HepG2 (cell line): ENCODE measurements at regions of chr3 and their contacts with region 1.

Region 1: GRCh38 chr3:133384331-133385027 is 15.4 kb upstream of the BFSP2 start:
- DNase-seq: peak; percentile 46
- ATAC-seq: peak; percentile 96
- H3K4me3 ChIP-seq: no peak overlapping the region
- H3K27ac ChIP-seq: no peak overlapping the region
- H3K4me1 ChIP-seq: peaks cover 13% of the 10 kb centered on the region
- H3K27me3 ChIP-seq: peaks cover 0 to 11% of the 10 kb centered on the region in 2 experiments; a peak in 2 of 5 replicates
- CTCF ChIP-seq: peak; percentile 96
- EP300 ChIP-seq: no peak
- POLR2A ChIP-seq: no peak
- RAD21 ChIP-seq: peak; percentile 88

Region 2: GRCh38 chr3:132535575-132536441 is 848.7 kb before region 1 on chr3:
- CTCF ChIA-PET with region 1: no interaction called
- POLR2A ChIA-PET with region 1: no interaction called
- in situ Hi-C with region 1: loop called (anchors 25 kb)
- intact Hi-C with region 1: no loop called
- DNase-seq: peak; percentile 69
- ATAC-seq: peak; percentile 90
- H3K4me3 ChIP-seq: no peak overlapping the region
- H3K27ac ChIP-seq: peak overlapping the region; percentile 14
- H3K4me1 ChIP-seq: peaks cover 23% of the 10 kb centered on the region
- H3K27me3 ChIP-seq: no peaks in the 10 kb centered on the region
- CTCF ChIP-seq: peak; percentile 75
- EP300 ChIP-seq: no peak
- POLR2A ChIP-seq: no peak
- RAD21 ChIP-seq: peak; percentile 45

Region 3: DNA sequence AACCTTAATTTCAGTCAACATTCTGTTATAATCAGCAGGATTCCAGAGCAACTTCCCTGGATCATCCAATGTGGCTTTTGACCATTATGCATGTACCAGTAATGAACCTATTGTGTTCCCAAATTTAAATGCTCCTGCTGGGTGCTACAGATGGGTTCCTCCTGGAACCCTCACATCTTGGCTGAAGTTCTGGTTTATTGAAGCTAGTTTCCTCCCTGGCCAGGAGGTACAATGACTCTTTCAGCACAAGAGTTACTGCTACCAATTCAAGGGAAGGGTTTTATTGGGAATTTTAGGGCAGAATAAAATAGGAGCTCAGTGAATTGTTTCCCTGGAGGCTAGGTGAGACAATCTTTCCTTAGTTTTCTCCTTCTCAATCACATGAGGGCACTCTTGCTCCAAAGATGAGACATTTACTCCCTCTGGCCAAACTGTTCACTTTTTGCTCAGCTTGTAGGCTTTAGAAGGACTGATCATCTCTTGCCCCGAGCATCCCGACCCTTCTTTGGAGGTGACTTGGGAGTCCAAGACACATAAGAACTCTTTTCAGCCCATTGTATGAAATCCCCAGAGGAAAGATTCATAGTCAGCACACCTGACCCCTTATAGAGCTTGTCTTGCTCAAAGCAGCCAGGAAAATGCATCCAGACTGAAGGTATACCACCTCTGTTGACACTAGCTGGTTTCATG is 653.4 kb before region 1 on chr3:
- CTCF ChIA-PET with region 1: interaction called, 12 read pairs
- POLR2A ChIA-PET with region 1: no interaction called
- in situ Hi-C with region 1: loop called (anchors 5 kb)
- intact Hi-C with region 1: loop called (anchors 1 kb)
- DNase-seq: peak; percentile 33
- ATAC-seq: peak; percentile 84
- H3K4me3 ChIP-seq: no peak overlapping the region
- H3K27ac ChIP-seq: no peak overlapping the region
- H3K4me1 ChIP-seq: no peaks in the 10 kb centered on the region
- H3K27me3 ChIP-seq: no peaks in the 10 kb centered on the region; a peak in 1 of 5 replicates
- CTCF ChIP-seq: peak; percentile 69
- EP300 ChIP-seq: no peak
- POLR2A ChIP-seq: no peak
- RAD21 ChIP-seq: peak; percentile 58

Region 4: GRCh38 chr3:132803889-132804288 is 580.6 kb before region 1 on chr3:
- CTCF ChIA-PET with region 1: no interaction called
- POLR2A ChIA-PET with region 1: no interaction called
- in situ Hi-C with region 1: no loop called
- intact Hi-C with region 1: loop called (anchors 5 kb)
- DNase-seq: no peak
- ATAC-seq: peak; percentile 82
- H3K4me3 ChIP-seq: no peak overlapping the region
- H3K27ac ChIP-seq: no peak overlapping the region
- H3K4me1 ChIP-seq: no peaks in the 10 kb centered on the region
- H3K27me3 ChIP-seq: no peaks in the 10 kb centered on the region
- CTCF ChIP-seq: peak; percentile 40
- EP300 ChIP-seq: no peak
- POLR2A ChIP-seq: no peak
- RAD21 ChIP-seq: no peak

Region 5: GRCh38 chr3:133040696-133041523 is 343.6 kb before region 1 on chr3:
- CTCF ChIA-PET with region 1: interaction called, 17 read pairs
- POLR2A ChIA-PET with region 1: no interaction called
- in situ Hi-C with region 1: loop called (anchors 5 kb)
- intact Hi-C with region 1: loop called (anchors 1 kb)
- DNase-seq: peak; percentile 58
- ATAC-seq: peak; percentile 95
- H3K4me3 ChIP-seq: no peak overlapping the region
- H3K27ac ChIP-seq: no peak overlapping the region
- H3K4me1 ChIP-seq: no peaks in the 10 kb centered on the region
- H3K27me3 ChIP-seq: peaks cover 0 to 25% of the 10 kb centered on the region in 2 experiments; a peak in 3 of 5 replicates
- CTCF ChIP-seq: peak; percentile 84
- EP300 ChIP-seq: no peak
- POLR2A ChIP-seq: no peak
- RAD21 ChIP-seq: peak; percentile 68; the same call in 1 of the 2 replicates

Region 6: GRCh38 chr3:133152056-133152455 is 232.4 kb before region 1 on chr3:
- CTCF ChIA-PET with region 1: no interaction called
- POLR2A ChIA-PET with region 1: no interaction called
- in situ Hi-C with region 1: no loop called
- intact Hi-C with region 1: no loop called
- DNase-seq: no peak
- ATAC-seq: no peak
- H3K4me3 ChIP-seq: no peak overlapping the region
- H3K27ac ChIP-seq: no peak overlapping the region
- H3K4me1 ChIP-seq: no peaks in the 10 kb centered on the region
- H3K27me3 ChIP-seq: no peaks in the 10 kb centered on the region
- CTCF ChIP-seq: no peak
- EP300 ChIP-seq: no peak
- POLR2A ChIP-seq: no peak
- RAD21 ChIP-seq: no peak

Region 7: DNA sequence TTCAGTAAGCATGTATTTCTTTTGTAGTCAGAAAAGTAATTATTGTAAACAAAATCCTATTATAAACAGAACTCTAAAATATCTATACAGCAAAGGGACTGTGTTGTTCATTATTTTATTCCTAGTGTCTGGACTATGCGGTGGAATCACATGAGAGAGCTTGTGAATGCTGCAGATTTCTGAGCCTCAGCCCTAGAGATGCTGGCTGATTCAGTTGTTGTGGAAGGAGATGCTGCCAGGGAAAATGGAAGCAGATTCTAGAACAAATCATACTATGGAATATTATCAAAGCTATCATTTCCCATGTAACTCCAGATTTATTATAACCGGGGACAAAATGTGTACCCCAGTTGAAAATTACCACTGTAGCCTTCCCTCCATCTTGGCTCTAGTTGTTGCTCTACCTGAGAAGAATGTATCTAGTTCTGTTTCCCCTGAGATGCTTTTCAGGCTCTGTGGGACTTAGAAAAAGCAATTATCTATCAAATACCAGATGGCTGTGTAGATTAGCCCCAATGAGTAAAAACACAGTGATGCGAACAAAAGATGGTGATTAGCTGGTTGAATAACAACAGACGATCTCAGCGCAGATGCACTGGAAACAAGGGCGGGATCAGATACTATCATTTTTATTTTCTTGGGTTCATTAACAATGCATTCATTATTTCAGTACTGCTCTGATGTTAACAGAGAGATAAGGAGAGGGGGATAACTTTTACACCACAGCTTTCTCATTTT is 215.0 kb before region 1 on chr3:
- CTCF ChIA-PET with region 1: no interaction called
- POLR2A ChIA-PET with region 1: no interaction called
- in situ Hi-C with region 1: no loop called
- intact Hi-C with region 1: loop called (anchors 5 kb)
- DNase-seq: no peak
- ATAC-seq: no peak
- H3K4me3 ChIP-seq: no peak overlapping the region
- H3K27ac ChIP-seq: no peak overlapping the region
- H3K4me1 ChIP-seq: no peaks in the 10 kb centered on the region
- H3K27me3 ChIP-seq: no peaks in the 10 kb centered on the region
- CTCF ChIP-seq: no peak
- EP300 ChIP-seq: no peak
- POLR2A ChIP-seq: no peak
- RAD21 ChIP-seq: no peak